ENCODE measurements at regions of chr15 and their contacts with region 1.

Region 1: DNA sequence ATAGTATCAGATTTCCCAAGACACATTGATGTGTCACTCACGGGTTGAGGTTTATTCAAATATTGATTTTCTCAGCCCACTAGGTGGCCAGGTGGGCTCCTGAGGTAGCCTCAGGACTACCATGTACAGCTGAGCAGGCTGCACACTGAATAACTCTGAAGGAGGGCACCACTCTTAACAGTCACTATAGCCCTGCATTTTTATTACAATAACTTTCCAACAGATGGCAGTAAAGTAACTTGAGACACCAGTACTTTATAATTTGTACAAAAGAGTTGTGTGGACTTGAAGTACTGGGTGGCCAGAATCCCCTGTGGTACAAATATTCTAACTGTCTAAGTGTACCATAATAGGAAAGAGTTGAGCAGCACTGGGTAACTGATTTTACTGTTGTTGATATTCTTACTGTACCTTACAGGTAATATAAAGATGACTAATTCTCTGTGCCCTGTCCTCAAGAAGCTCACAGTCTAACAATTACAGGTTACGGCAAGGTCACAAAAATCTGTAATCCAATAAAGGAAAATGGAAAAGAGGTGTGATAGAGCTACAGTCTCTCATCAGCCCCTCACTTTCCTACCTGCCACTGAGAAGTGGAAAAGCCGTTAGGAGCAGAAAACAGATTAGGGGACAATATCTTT is 76.0 kb downstream of the ETFA start:
- DNase-seq: peak; percentile 42
- ATAC-seq: peak; percentile 90
- H3K4me3 ChIP-seq: no peak overlapping the region
- H3K27ac ChIP-seq: peak overlapping the region; percentile 35
- H3K4me1 ChIP-seq: peaks cover 51% of the 10 kb centered on the region
- H3K27me3 ChIP-seq: no peaks in the 10 kb centered on the region
- CTCF ChIP-seq: peak; percentile 53
- EP300 ChIP-seq: no peak
- POLR2A ChIP-seq: no peak
- RAD21 ChIP-seq: peak; percentile 32; the same call in 1 of the 2 replicates

Region 2: GRCh38 chr15:76285239-76285825 is 50.0 kb after region 1 on chr15:
- CTCF ChIA-PET with region 1: no interaction called
- POLR2A ChIA-PET with region 1: no interaction called
- in situ Hi-C with region 1: no loop called
- intact Hi-C with region 1: loop called (anchors 5 kb)
- DNase-seq: peak; percentile 4
- ATAC-seq: peak; percentile 34; the same call in 1 of the 3 replicates
- H3K4me3 ChIP-seq: no peak overlapping the region
- H3K27ac ChIP-seq: no peak overlapping the region
- H3K4me1 ChIP-seq: peaks cover 17% of the 10 kb centered on the region
- H3K27me3 ChIP-seq: no peaks in the 10 kb centered on the region
- CTCF ChIP-seq: 0 out of 2 replicates have a peak, but pooled peaks have one; percentile 33
- EP300 ChIP-seq: no peak
- POLR2A ChIP-seq: no peak
- RAD21 ChIP-seq: no peak

Region 3: DNA sequence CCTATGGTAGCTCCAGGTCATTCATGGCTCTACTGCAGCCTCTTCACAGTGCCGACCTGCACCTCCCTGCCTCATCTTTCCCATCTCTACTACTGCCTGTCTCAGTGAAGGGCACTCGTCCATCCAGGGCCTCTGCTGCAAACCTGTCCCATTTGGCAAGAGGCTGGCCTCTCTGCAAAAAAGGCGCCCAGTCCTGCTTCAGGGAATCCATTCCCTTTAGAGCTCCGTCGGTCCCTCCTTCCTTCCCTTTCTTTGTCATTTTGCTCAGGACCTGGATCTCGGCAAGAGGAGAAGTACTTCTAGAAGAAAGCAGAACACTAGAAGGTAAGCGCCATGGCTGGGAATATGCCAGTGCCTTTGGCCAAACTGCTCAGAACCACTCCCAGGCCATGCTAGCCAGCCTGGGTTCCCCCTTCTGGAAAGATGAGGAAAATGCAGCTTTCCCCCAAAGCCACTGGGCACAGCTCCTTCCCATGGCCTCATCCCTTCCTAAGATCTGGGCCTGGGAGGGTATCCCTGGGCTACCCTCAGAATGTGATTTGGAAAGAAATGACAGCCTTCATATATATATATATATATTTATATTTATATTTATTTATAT is 94.9 kb after region 1 on chr15:
- CTCF ChIA-PET with region 1: no interaction called
- POLR2A ChIA-PET with region 1: interaction called, 3 read pairs
- in situ Hi-C with region 1: loop called (anchors 5 kb)
- intact Hi-C with region 1: loop called (anchors 5 kb)
- DNase-seq: peak; percentile 47
- ATAC-seq: peak; percentile 65
- H3K4me3 ChIP-seq: no peak overlapping the region
- H3K27ac ChIP-seq: no peak overlapping the region
- H3K4me1 ChIP-seq: peaks cover 35% of the 10 kb centered on the region
- H3K27me3 ChIP-seq: peaks cover 0 to 4% of the 10 kb centered on the region in 2 experiments; a peak in 2 of 5 replicates
- CTCF ChIP-seq: peak; percentile 75
- EP300 ChIP-seq: no peak
- POLR2A ChIP-seq: no peak
- RAD21 ChIP-seq: peak; percentile 52; the same call in 1 of the 2 replicates

Measured in HepG2 (cell line).